MCF 10A (cell line): ENCODE measurements at regions of chr14 and their contacts with region 1.

Region 1: GRCh38 chr14:49828640-49829039 is 23.9 kb downstream of the NEMF start:
- DNase-seq: no peak
- H3K4me3 Mint-ChIP-seq: no peak overlapping the region
- H3K27ac Mint-ChIP-seq: no peak overlapping the region
- H3K4me1 Mint-ChIP-seq: no peaks in the 10 kb centered on the region
- H3K27me3 Mint-ChIP-seq: no peaks in the 10 kb centered on the region
- CTCF ChIP-seq: no peak

Region 2: GRCh38 chr14:48703728-48704467 is 1124.7 kb before region 1 on chr14:
- CTCF ChIA-PET with region 1: no interaction called
- POLR2A ChIA-PET with region 1: no interaction called
- intact Hi-C with region 1: no loop called
- DNase-seq: no peak
- H3K4me3 Mint-ChIP-seq: no peak overlapping the region
- H3K27ac Mint-ChIP-seq: no peak overlapping the region
- H3K4me1 Mint-ChIP-seq: no peaks in the 10 kb centered on the region
- H3K27me3 Mint-ChIP-seq: no peaks in the 10 kb centered on the region
- CTCF ChIP-seq: no peak

Region 3: GRCh38 chr14:49796025-49796424 is 32.6 kb before region 1 on chr14:
- CTCF ChIA-PET with region 1: interaction called, 4 read pairs
- POLR2A ChIA-PET with region 1: no interaction called
- intact Hi-C with region 1: loop called (anchors 1 kb)
- DNase-seq: no peak
- H3K4me3 Mint-ChIP-seq: no peak overlapping the region
- H3K27ac Mint-ChIP-seq: no peak overlapping the region
- H3K4me1 Mint-ChIP-seq: peaks cover 6% of the 10 kb centered on the region
- H3K27me3 Mint-ChIP-seq: no peaks in the 10 kb centered on the region
- CTCF ChIP-seq: no peak